BJ (cell line): ENCODE measurements at regions of chr1 and their contacts with region 1.

Region 1: DNA sequence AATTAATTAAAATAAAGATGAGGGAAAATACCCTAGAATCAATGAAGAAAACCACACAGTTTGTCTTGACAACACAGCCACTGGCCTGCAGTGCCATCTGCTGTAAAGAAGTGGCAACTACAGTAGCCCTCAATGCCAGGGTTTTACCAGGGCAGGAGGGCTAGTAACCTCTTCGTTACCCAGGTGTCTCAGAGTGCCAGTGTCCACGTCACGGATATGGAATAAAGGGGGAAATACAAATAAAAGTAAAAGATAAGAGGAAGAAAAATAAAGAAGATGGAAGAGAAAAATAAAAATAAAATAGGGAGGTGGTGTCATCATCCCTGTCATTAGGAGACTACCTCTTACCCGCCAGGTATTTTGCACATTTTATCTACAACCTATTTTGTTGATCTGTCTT is 14.2 kb upstream of the SLC44A3 start:
- DNase-seq: no peak
- H3K4me3 ChIP-seq: peak overlapping the region; percentile 17; the same call in 1 of the 2 replicates
- H3K27me3 ChIP-seq: peaks cover 3% of the 10 kb centered on the region; the same call in 1 of the 2 replicates
- CTCF ChIP-seq: peak; percentile 88

Region 2: GRCh38 chr1:94471271-94471670 is 334.6 kb before region 1 on chr1:
- CTCF ChIA-PET with region 1: interaction called, 26 read pairs
- POLR2A ChIA-PET with region 1: no interaction called
- DNase-seq: no peak
- H3K4me3 ChIP-seq: no peak overlapping the region
- H3K27me3 ChIP-seq: no peaks in the 10 kb centered on the region
- CTCF ChIP-seq: no peak

Region 3: DNA sequence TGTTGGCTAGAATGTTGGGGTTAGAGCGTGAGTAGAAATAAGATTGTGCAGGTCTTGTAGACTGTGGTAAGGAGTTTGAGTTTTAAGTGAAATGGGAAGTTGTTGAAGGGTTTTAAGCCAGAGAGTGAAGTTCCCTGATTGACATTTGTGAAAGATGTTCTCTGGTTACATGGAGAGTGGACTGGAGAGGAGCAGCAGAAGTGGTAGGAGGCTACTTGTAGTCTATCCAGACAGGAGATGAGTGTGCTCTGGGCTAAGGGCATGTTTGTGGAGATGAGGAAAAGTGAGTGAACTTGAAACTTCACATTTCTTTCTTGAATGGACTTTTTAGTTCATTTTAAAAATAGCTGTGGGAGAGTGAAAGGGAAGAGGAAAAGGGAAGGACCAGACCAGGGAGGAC is 301.3 kb before region 1 on chr1:
- CTCF ChIA-PET with region 1: interaction called, 12 read pairs
- POLR2A ChIA-PET with region 1: no interaction called
- DNase-seq: no peak
- H3K4me3 ChIP-seq: no peak overlapping the region
- H3K27me3 ChIP-seq: no peaks in the 10 kb centered on the region
- CTCF ChIP-seq: no peak

Region 4: DNA sequence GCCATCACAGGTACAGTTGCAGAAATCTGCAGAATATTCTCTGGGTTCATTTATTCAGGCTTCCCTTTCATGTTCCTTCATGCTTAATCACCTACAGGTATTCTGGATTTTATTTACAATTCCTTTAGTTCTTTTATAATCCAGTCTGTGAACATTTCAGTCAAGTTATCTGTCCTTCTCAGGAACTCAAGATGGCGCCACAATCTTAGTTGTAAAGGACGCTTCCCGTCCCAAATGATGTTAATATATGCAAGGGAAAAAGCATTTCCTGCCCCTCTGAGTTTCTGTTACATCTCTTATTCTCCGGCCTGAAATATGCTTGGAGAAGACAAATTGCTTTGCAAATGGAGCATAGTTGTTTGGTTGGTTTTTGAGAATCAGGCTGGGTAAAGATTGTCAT is 283.6 kb before region 1 on chr1:
- CTCF ChIA-PET with region 1: interaction called, 208 read pairs
- POLR2A ChIA-PET with region 1: no interaction called
- DNase-seq: no peak
- H3K4me3 ChIP-seq: no peak overlapping the region
- H3K27me3 ChIP-seq: no peaks in the 10 kb centered on the region
- CTCF ChIP-seq: peak; percentile 57

Region 5: DNA sequence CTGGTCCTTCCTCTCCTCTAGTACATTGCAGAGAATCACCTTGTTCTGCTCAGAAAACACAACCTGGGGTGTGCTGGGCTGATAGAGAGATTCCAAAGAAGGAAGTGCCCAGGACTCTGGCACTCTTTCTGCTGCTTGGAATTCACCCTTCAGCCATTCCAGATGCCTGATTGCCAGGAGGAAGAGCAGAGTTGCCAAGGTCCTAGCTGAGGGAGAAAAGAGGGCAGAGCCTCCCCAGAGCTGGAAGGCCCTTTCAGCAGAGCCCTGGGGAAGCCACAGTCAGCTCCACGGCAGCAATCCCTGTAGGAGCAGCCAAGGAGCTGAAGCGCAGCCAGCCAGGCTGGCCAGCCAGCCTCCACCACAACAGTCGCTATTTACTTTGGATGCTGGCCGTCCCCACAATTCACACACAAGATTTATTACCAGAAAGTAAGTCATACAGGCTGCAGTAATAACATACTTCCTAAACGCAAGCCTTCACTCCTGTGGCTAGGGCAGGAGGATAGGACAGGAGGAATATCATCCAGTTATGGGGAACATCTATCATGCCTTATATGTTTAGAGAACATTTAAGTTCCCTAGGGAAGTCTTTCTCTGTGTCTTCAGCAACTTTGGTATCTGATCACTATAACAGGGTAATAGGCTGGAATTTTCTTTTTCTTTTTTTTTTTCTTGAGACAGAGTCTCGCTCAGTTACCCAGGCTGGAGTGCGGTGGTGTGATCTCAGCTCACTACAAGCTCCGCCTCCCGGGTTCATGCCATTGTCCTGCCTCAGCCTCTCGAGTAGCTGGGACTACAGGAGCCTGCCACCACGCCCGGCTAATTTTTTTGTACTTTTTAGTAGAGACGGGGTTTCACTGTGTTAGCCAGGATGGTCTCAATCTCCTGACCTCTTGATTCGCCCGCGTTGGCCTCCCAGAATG is 22.3 kb before region 1 on chr1:
- CTCF ChIA-PET with region 1: no interaction called
- POLR2A ChIA-PET with region 1: no interaction called
- DNase-seq: peak; percentile 60
- H3K4me3 ChIP-seq: no peak overlapping the region
- H3K27me3 ChIP-seq: no peaks in the 10 kb centered on the region
- CTCF ChIP-seq: no peak

Region 6: GRCh38 chr1:94819941-94820746 is 14.2 kb after region 1 on chr1 and contains the start of gene SLC44A3:
- CTCF ChIA-PET with region 1: interaction called, 16 read pairs
- POLR2A ChIA-PET with region 1: no interaction called
- DNase-seq: no peak
- H3K4me3 ChIP-seq: peak within 1 kb of the TSS; percentile 61
- H3K27me3 ChIP-seq: peaks cover 17% of the 10 kb centered on the region
- CTCF ChIP-seq: peak; percentile 40
- polyA plus RNA-seq, gene SLC44A3: 1.1 and 2.1 TPM in 2 replicates